ENCODE measurements at regions of chr6 and their contacts with region 1.

Region 1: DNA sequence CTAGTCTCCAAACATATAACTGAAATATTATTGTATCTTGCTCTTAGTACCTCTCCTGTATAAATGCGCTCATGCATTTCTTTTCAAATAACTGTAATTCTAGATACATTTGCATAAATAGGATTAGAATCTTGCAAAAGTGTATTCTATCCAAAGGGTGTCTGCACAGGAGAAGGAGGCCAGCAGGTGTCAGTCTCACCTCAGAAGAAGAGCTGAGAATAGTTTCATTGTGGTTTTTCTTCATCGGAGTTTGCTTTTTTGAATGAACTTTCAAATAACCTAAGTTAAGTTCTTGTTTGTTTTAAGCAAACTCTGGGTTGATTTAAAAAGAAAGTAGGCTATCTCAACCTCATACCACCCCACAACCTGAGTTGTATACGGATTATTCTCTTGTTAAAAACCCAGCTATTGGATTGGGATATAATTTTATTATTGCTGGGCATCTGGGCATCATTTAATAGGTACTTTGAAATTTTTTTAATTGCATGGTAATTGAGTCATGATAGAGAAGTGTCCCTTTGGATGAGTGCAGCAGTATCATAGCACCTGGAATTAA is 125.0 kb upstream of the MLIP start:
- DNase-seq: peak; percentile 79
- ATAC-seq: peak; percentile 29
- H3K4me3 ChIP-seq: no peak overlapping the region
- H3K27ac ChIP-seq: no peak overlapping the region
- H3K4me1 ChIP-seq: peaks cover 45% of the 10 kb centered on the region
- H3K27me3 ChIP-seq: no peaks in the 10 kb centered on the region
- CTCF ChIP-seq: peak; percentile 97

Region 2: DNA sequence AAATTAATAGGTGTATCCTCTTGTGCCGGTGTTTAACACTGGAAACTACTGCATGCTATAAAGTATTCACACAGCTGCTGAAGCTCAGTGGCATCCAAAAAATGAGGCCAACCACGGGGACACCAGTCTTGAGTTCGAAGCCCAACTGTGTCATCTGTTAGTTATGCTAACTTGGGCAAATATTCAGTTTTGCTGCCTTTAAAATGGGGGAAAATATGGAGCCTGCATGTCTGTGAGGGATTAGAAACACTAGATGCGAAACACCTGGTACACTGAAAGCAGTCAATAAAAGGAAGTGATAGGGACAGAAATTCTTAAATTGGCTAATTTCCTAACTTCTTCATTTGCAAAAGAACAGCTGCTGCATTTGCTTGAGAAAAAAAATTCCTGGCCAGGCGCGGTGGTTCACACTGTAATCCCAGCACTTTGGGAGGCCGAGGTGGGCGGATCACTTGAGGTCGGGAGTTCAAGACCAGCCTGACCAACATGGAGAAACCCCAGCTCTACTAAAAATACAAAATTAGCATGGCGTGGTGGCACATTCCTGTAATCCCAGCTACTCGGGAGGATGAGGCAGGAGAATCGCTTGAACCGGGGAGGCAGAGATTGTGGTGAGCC is 88.4 kb after region 1 on chr6:
- CTCF ChIA-PET with region 1: no interaction called
- POLR2A ChIA-PET with region 1: no interaction called
- intact Hi-C with region 1: no loop called
- DNase-seq: no peak
- ATAC-seq: no peak
- H3K4me3 ChIP-seq: no peak overlapping the region
- H3K27ac ChIP-seq: no peak overlapping the region
- H3K4me1 ChIP-seq: no peaks in the 10 kb centered on the region
- H3K27me3 ChIP-seq: no peaks in the 10 kb centered on the region
- CTCF ChIP-seq: no peak

Region 3: GRCh38 chr6:54238396-54238795 is 252.2 kb after region 1 on chr6:
- CTCF ChIA-PET with region 1: no interaction called
- POLR2A ChIA-PET with region 1: no interaction called
- intact Hi-C with region 1: loop called (anchors 2 kb)
- DNase-seq: peak; percentile 14
- ATAC-seq: peak; percentile 76
- H3K4me3 ChIP-seq: no peak overlapping the region
- H3K27ac ChIP-seq: no peak overlapping the region
- H3K4me1 ChIP-seq: peaks cover 9% of the 10 kb centered on the region; the same call in 1 of the 2 replicates
- H3K27me3 ChIP-seq: no peaks in the 10 kb centered on the region
- CTCF ChIP-seq: no peak

Region 4: DNA sequence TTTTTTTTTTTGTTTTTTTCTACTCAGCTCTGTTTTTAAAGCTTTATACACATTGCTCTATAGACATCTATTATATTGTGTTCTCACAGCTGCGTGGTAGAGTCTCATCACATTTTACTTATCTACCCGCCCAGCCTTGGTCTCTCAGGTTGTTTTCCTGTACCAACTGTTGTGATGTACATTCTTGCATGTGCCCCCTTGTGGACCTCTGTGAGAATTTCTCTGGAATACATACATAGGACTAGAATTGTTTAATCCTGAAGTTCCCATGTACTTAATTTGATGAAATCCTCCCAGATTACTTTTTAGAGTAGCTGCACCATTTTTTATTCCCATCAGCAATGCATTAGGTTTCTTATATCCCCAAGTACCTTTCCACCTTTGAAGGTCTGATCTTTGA is 281.6 kb after region 1 on chr6:
- CTCF ChIA-PET with region 1: no interaction called
- POLR2A ChIA-PET with region 1: no interaction called
- intact Hi-C with region 1: loop called (anchors 1 kb)
- DNase-seq: peak; percentile 74
- ATAC-seq: peak; percentile 62
- H3K4me3 ChIP-seq: no peak overlapping the region
- H3K27ac ChIP-seq: no peak overlapping the region
- H3K4me1 ChIP-seq: peaks cover 10% of the 10 kb centered on the region; the same call in 1 of the 2 replicates
- H3K27me3 ChIP-seq: no peaks in the 10 kb centered on the region
- CTCF ChIP-seq: peak; percentile 74

Region 5: DNA sequence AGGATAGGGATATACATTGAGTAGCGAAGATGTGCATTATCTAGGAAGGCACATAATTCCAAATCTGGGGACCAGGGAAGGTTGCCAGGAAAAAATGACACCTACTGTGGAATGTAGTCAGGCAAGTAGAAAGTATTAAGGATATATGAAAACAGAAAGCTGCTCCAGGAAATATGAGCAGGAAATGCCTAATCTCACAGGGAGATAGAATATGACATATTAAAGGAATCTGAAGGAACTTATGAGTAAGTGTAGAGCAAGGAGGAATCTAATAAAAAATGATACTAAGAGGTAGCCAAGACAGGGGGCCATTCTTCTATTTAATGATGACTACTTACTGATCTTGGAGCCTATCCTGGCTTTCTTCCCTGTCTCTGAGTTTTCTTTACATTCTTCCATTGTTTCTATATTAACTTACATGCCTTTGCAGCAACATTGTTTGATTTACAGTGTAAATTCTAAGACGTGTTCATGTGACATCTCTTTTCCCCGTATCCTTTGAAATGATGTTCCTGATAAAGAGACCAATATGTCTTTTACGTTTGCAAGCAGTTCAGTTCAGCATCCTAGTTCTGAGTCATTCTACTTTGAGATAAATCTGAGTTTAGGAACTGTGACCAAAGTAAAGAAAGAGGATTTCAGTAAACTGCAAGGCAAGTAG is 380.6 kb after region 1 on chr6:
- CTCF ChIA-PET with region 1: no interaction called
- POLR2A ChIA-PET with region 1: no interaction called
- intact Hi-C with region 1: loop called (anchors 10 kb)
- DNase-seq: peak; percentile 95
- ATAC-seq: peak; percentile 94
- H3K4me3 ChIP-seq: peak overlapping the region; percentile 8
- H3K27ac ChIP-seq: peak overlapping the region; percentile 50
- H3K4me1 ChIP-seq: peaks cover 24% of the 10 kb centered on the region
- H3K27me3 ChIP-seq: no peaks in the 10 kb centered on the region
- CTCF ChIP-seq: no peak

Region 6: DNA sequence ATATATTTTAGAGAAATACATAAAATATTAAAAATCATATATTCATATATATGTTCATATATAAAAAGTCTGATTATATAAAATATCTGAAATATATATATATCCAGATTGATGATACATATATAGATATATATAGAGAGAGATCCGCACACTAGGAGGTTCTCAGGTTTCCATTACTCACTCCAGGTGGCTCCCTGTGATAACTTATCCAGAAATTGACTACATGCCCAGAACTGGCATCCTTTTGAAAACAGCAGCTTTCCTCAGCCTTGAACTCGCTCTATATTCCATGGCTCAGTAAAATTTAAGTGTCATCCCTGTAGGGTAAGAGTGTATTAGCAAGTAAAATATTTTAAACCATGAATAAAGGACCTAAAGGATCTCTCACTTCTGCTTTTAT is 528.8 kb after region 1 on chr6:
- CTCF ChIA-PET with region 1: no interaction called
- POLR2A ChIA-PET with region 1: no interaction called
- intact Hi-C with region 1: loop called (anchors 10 kb)
- DNase-seq: peak; percentile 69
- ATAC-seq: peak; percentile 88
- H3K4me3 ChIP-seq: no peak overlapping the region
- H3K27ac ChIP-seq: no peak overlapping the region
- H3K4me1 ChIP-seq: peaks cover 5% of the 10 kb centered on the region; the same call in 1 of the 2 replicates
- H3K27me3 ChIP-seq: no peaks in the 10 kb centered on the region
- CTCF ChIP-seq: peak; percentile 26; the same call in 1 of the 2 replicates

Region 7: DNA sequence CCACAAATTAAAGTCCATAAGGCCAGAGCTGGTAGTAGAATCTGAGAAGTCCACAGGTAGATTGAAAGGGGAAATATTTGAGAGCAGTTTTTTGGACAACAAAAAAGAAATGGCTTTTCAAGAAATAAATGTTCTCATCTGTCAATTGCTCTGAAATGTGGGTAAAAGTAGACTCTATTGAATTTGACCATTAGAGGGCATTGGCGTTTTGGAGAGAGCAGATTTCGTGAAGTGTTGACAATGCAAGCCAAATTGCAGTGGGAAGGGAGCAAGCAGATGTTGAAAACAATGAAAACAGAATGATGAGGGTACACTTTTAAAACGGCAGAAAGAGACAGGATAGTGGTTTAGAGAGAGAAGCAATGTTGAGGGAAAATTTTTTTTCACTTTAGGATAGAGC is 711.2 kb after region 1 on chr6:
- CTCF ChIA-PET with region 1: no interaction called
- POLR2A ChIA-PET with region 1: no interaction called
- intact Hi-C with region 1: loop called (anchors 1 kb)
- DNase-seq: peak; percentile 61
- ATAC-seq: peak; percentile 25; the same call in 1 of the 2 replicates
- H3K4me3 ChIP-seq: no peak overlapping the region
- H3K27ac ChIP-seq: no peak overlapping the region
- H3K4me1 ChIP-seq: peaks cover 42% of the 10 kb centered on the region
- H3K27me3 ChIP-seq: no peaks in the 10 kb centered on the region
- CTCF ChIP-seq: peak; percentile 72

Region 8: DNA sequence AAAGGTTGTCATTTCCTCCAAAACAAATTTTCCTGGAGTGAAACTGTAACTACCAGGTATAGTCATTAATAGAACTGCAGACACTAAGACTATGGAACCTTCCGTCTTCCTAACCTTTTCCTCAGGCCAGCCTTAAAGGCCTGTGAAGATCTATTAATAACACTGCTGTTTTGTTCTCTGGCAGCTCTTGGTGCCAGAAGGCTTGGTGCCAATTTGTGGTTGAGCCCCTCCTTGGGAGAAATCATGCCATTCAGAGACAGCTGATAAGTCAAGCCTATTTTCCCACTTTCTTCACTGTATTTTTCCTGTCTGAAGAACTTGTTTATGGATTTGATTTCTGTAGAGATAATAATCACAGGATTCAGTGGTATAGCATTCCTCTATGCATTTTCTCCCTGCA is 1252.9 kb after region 1 on chr6:
- CTCF ChIA-PET with region 1: no interaction called
- POLR2A ChIA-PET with region 1: no interaction called
- intact Hi-C with region 1: loop called (anchors 5 kb)
- DNase-seq: peak; percentile 16
- ATAC-seq: no peak
- H3K4me3 ChIP-seq: no peak overlapping the region
- H3K27ac ChIP-seq: no peak overlapping the region
- H3K4me1 ChIP-seq: no peaks in the 10 kb centered on the region
- H3K27me3 ChIP-seq: no peaks in the 10 kb centered on the region
- CTCF ChIP-seq: no peak

Measured in PC-3 (cell line).